OCI-LY7 (cell line): ENCODE measurements at regions of chr20 and their contacts with region 1.

Region 1: DNA sequence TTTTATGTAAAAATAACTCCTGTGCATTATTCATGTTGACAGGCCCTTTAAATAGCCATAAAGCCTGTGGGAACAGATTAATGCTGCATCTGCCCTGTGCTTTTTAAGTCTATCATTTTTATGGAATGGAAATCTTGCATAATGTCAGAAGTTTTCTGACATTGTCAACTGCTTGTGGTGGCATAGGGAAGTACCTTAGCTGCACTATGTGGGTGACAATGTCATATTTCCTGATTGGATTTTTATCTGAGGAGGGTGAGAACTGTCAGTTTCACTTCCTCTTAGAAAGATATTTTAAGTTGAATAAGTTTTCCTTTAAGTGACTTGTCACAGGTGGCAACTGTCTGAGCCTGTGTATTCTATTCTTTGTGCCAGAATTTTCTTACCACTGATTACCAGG is 267.9 kb downstream of the PLCB1 start:
- DNase-seq: peak; percentile 93
- H3K4me3 ChIP-seq: peak overlapping the region; percentile 47
- H3K27ac ChIP-seq: peak overlapping the region; percentile 98
- H3K4me1 ChIP-seq: peaks cover 86% of the 10 kb centered on the region
- CTCF ChIP-seq: no peak

Region 2: DNA sequence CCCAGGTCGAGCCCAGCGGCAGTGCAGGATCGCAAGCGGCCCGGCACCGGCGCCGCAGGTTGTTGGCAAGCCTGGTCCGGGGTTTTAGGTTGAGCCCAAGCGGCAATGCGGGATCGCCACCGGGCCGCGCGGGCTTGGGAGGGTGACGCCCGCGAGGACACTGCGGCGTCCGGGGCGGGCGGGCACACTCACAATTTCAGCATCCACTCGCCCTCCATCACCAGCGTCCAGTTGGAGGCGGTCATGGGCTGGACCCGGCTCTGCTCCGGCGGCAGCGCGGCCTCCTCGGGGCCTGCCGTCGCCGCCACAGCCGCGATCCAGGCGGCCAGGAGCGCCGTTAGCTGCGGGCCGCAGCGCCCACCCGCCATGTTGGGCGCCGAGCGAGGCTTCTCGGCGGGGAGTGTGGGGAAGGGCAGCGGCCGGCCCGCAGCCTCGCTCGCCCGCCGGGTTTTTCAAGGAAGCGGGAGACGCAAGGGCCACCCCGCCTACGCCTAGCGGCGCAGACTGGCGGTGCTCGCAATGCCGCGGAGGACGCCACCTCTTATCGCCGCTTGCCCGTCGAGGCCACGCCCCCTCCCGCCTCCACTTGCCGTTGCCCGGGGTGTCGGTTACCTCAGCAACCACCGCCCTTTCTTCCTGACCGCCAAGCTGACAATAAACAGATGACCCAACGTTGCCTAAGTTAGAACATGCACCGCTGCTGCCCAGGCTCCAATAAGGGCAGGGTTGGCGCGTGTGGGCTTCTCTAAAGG is 380.5 kb before region 1 on chr20 and contains the start of gene TMX4:
- CTCF ChIA-PET with region 1: no interaction called
- POLR2A ChIA-PET with region 1: interaction called, 4 read pairs
- intact Hi-C with region 1: loop called (anchors 5 kb)
- DNase-seq: peak; percentile 96
- H3K4me3 ChIP-seq: peak within 1 kb of the TSS; percentile 92
- H3K27ac ChIP-seq: peak within 1 kb of the TSS; percentile 88
- H3K4me1 ChIP-seq: peaks cover 30% of the 10 kb centered on the region
- CTCF ChIP-seq: no peak; the same call in 1 of the 2 replicates
- total RNA-seq, gene TMX4: 22.4 and 24.9 TPM in 2 replicates

Region 3: GRCh38 chr20:8414586-8415274 is 14.8 kb after region 1 on chr20:
- CTCF ChIA-PET with region 1: no interaction called
- POLR2A ChIA-PET with region 1: interaction called, 18 read pairs
- intact Hi-C with region 1: no loop called
- DNase-seq: no peak
- H3K4me3 ChIP-seq: no peak overlapping the region
- H3K27ac ChIP-seq: no peak overlapping the region
- H3K4me1 ChIP-seq: peaks cover 12% of the 10 kb centered on the region
- CTCF ChIP-seq: no peak

Region 4: DNA sequence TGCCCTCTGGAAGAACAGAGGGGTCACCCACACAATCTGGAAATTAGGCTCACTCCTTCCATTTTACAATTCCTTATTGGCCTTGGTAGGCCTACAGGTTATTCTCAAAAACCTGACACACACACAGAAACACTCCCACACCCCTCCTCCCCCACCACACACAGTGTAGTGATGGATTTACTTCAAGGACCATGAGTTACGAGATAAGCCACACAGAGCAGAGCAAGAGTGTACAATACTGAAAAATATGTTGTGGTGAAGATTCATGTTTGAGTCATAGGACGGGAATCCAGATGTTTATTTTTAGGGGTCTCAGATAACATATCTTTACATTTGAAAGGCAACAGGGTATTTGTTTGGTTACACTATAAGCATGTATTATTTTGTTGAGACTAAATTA is 24.1 kb after region 1 on chr20:
- CTCF ChIA-PET with region 1: no interaction called
- POLR2A ChIA-PET with region 1: interaction called, 12 read pairs
- intact Hi-C with region 1: loop called (anchors 2 kb)
- DNase-seq: no peak
- H3K4me3 ChIP-seq: no peak overlapping the region
- H3K27ac ChIP-seq: peak overlapping the region; percentile 30
- H3K4me1 ChIP-seq: peaks cover 76% of the 10 kb centered on the region
- CTCF ChIP-seq: no peak

Region 5: DNA sequence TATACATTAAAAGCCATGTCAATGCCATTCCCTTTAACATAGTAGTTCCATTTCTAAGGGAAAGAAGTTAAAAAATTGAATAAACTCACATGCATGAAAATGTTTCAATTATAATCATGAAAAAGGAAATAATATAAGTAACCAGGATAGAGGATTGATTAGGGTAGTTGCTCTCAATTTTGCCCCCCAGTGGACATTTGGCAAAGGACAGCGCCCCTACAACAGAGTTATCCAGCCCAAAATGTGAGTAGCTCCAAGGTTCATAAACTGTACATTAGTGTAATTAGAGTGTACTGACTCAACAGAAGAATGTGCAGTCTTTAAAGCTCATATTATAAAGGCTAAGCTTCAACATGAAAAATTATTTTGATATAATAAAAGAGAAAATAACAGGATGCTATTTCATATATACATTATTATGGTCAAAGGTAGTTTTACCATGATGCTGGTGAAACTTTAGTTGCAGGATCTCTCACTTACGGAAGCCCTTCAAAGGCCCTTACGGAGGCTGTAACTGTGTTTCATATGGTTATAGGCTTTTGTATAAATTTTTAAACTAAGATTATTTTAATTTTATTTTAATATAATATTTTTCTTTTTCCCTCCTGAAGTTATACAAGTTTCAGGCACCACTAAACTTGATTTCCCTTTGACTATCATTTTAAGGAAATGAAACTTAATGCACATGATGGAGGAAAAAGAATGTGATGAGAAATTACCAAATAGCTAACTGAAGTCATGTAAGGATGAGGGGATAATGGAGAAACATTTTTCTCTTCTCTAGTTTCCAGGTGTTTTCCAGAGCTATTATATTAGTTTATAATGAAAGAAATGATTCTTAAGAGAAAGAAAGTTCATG is 135.7 kb after region 1 on chr20:
- CTCF ChIA-PET with region 1: no interaction called
- POLR2A ChIA-PET with region 1: interaction called, 6 read pairs
- intact Hi-C with region 1: loop called (anchors 2 kb)
- DNase-seq: peak; percentile 69
- H3K4me3 ChIP-seq: peak overlapping the region; percentile 72
- H3K27ac ChIP-seq: peak overlapping the region; percentile 93
- H3K4me1 ChIP-seq: peaks cover 89% of the 10 kb centered on the region
- CTCF ChIP-seq: peak; percentile 95

Region 6: DNA sequence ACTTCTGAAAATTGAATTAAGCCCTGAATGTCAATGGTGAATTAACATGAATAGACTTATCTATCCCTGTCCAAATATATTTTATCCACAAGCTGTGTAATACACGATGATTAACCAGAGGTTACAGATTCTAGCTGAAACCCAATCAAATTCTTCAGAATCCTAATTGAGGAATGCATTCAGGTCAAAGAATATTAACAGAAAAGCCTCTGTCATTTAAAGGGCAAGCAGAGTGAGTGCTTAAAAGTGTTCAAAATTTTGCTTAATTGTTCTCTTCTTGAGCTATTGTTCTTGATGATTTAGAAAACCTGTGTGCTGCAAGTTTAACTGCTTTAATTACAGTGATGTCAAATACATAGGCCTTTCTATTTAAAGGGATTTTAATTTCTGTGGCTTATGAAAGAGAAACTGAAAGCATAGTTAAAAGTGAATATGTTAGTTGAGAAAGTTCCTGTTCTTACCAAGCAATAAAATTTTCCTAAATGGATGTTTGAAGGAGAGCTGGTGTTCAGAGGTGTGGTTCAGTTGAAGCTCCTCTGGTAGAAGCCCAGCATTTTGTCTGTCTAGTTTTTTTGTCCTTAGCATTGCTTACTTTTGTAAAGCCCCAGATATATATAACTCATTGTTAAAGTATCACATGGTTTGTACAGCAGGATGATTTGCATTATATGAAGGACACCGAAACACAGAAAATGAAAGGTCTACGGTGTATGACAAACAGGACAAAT is 202.6 kb after region 1 on chr20:
- CTCF ChIA-PET with region 1: no interaction called
- POLR2A ChIA-PET with region 1: no interaction called
- intact Hi-C with region 1: loop called (anchors 10 kb)
- DNase-seq: peak; percentile 56
- H3K4me3 ChIP-seq: peak overlapping the region; percentile 58
- H3K27ac ChIP-seq: peak overlapping the region; percentile 77
- H3K4me1 ChIP-seq: peaks cover 34% of the 10 kb centered on the region
- CTCF ChIP-seq: no peak